ENCODE measurements at regions of chr4 and their contacts with region 1.

Region 1: GRCh38 chr4:25159884-25160713 is at the start of gene SEPSECS:
- H3K4me3 Mint-ChIP-seq: peak within 1 kb of the TSS; percentile 77
- H3K27ac Mint-ChIP-seq: peak within 1 kb of the TSS; percentile 98
- H3K4me1 Mint-ChIP-seq: peaks cover 35% of the 10 kb centered on the region
- H3K27me3 Mint-ChIP-seq: no peaks in the 10 kb centered on the region

Region 2: DNA sequence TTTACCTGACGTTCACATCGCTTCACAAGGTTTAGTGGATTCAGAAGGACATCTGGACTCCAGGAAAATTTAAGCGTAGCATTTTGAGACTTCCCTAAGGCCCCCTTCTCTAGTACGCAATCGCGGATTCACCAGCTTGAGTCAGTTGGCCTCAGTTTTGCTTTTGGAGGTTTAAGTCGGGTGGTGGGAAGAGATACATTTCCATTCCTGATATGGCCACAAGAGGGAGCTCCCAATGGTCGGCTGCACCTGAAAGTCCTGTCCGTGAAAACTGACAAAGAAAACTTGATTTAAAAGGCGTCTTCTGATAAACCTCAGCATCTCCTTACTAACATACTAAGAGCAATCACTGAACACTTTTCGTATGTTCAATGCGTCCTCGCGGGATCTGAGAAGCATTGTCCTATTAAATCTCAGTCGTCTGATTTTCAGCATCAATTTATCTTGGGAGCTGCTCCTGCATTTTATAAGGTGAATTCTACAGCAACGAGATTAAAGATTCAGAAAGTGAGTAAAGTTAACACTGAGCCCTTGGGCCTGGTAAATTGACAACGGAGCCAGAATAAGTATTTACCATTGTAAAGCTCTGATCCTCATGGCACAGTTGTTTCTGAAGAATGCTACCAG is 179.9 kb before region 1 on chr4:
- intact Hi-C with region 1: loop called (anchors 10 kb)
- H3K4me3 Mint-ChIP-seq: peak overlapping the region; percentile 40
- H3K27ac Mint-ChIP-seq: peak overlapping the region; percentile 83
- H3K4me1 Mint-ChIP-seq: peaks cover 41% of the 10 kb centered on the region
- H3K27me3 Mint-ChIP-seq: no peaks in the 10 kb centered on the region

Region 3: GRCh38 chr4:25180524-25181131 is 20.5 kb after region 1 on chr4:
- intact Hi-C with region 1: loop called (anchors 2 kb)
- H3K4me3 Mint-ChIP-seq: no peak overlapping the region
- H3K27ac Mint-ChIP-seq: no peak overlapping the region
- H3K4me1 Mint-ChIP-seq: peaks cover 13% of the 10 kb centered on the region
- H3K27me3 Mint-ChIP-seq: no peaks in the 10 kb centered on the region

Region 4: DNA sequence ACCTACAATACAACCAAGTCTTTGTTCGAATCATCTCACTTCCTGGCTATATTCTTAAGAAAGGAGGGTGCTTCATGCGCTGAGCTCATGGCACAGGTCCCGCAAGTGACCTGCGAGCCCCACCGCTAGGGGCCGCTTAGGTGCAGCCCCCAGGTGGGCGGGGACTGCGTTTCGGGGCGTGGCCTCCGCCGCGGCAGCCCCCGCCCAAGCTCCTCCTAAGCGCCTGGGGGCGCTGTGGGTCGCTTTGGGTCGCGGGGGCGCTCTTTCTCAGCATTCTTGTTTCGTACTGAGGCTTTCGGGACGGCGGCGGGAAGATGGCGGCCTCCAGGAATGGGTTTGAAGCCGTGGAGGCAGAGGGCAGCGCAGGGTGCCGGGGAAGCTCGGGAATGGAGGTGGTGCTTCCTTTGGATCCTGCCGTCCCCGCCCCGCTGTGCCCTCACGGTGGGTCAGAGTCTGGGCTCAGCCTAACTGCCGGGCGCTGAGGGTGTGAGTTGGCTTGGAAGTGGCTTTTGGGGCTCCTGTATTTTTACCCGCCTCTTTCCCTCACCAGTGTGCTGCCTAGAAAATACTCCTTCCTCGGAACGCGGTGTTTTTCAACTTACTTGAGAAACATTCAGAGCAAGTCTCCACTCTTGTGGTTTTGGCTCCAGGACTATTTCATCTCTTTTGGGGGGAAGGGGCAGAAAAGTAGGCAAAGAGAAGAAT is 152.5 kb after region 1 on chr4 and contains the start of gene ZCCHC4:
- intact Hi-C with region 1: loop called (anchors 2 kb)
- H3K4me3 Mint-ChIP-seq: peak within 1 kb of the TSS; percentile 98
- H3K27ac Mint-ChIP-seq: peak within 1 kb of the TSS; percentile 91
- H3K4me1 Mint-ChIP-seq: peaks cover 39% of the 10 kb centered on the region
- H3K27me3 Mint-ChIP-seq: no peaks in the 10 kb centered on the region